ENCODE measurements at regions of chr7 and their contacts with region 1.

Region 1: DNA sequence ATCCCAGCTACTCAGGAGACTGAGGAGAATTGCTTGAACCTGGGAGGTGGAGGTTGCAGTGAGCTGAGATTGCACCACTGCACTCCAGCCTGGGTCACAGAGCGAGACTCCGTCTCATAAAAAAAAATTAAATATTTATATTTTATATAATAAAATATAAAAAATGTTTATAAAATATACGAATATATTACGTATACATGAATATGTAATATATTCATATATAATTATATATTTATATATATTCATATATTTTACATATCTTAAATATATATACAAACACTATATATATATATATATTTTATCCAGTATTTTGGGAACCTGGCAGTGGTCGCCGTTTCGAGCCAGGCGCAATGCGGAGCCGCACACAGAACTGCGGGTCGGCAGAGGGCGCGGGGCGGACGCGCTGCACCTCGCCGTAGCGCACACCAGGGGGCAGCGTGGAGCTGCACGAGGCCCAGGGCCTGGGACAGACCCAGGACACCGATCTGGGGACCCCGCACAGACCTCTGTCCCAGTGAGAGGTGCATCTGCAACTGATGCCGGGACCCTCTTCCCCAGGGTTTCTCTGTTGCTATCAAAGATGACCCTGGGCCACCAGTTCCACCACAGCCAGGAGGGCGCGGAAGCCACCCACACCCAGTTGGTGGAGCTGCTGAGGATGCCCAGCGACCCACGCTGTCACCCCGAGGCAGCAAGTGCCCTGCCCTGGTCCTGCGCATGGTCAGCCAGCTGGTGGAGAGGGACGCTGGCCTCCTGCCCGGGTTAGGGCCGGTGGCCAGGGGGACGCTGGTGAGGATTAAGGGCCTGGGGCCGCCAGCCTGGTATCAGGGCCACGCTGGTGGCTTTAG is 22.7 kb downstream of the AP5Z1 start:
- DNase-seq: peak; percentile 52
- H3K4me3 Mint-ChIP-seq: no peak overlapping the region
- H3K27ac Mint-ChIP-seq: no peak overlapping the region
- H3K4me1 Mint-ChIP-seq: no peaks in the 10 kb centered on the region
- H3K27me3 Mint-ChIP-seq: no peaks in the 10 kb centered on the region

Region 2: GRCh38 chr7:4883374-4884144 is 85.5 kb after region 1 on chr7 and contains the start of gene RADIL:
- intact Hi-C with region 1: loop called (anchors 2 kb)
- DNase-seq: peak; percentile 77
- H3K4me3 Mint-ChIP-seq: peak within 1 kb of the TSS; percentile 34
- H3K27ac Mint-ChIP-seq: no peak within 1 kb of the TSS
- H3K4me1 Mint-ChIP-seq: peaks cover 8% of the 10 kb centered on the region
- H3K27me3 Mint-ChIP-seq: peaks cover 26% of the 10 kb centered on the region
- total RNA-seq, gene RADIL: 0.24 and 0.26 TPM in 2 replicates

Region 3: DNA sequence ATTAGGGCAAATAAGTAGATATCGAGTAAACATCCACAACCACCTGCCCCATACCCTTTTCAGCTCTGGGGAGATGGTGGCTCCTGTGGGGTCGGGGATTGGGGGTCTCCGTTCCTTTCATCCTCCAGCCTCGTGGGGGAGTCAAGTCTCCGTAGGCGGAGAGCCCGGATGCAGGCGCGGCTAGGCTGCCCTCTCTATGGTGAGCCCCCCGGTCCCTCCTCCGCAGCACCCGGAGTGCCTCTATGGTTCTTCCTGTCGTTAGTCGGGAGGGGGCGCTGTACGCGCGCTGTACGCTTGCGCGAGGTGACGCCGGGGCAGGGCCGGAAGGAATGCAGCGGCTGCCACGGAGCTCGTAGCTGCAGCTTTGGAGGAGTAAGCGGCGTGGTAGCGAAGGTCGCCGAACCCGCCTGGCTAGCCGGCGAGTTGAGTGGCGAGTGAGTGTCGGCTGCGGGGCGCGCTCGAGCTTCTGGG is 175.7 kb after region 1 on chr7:
- intact Hi-C with region 1: loop called (anchors 2 kb)
- DNase-seq: peak; percentile 92
- H3K4me3 Mint-ChIP-seq: peak overlapping the region; percentile 94
- H3K27ac Mint-ChIP-seq: peak overlapping the region; percentile 94
- H3K4me1 Mint-ChIP-seq: peaks cover 18% of the 10 kb centered on the region
- H3K27me3 Mint-ChIP-seq: no peaks in the 10 kb centered on the region

Measured in activated T-helper 1 cell treated with anti-CD3 and anti-CD28 coated beads, Interleukin-12 subunit alpha, Interleukin-12 subunit beta, Interleukin-2, Interleukin-4 antibody, amounts not matched to agents 30 ng/mL and 10 ng/mL and 1 ng/mL, durations not matched to agents 14 hours and 24 hours and 36 hours (primary cell).